MCF 10A (cell line): ENCODE measurements at regions of chr12 and their contacts with region 1.

Region 1: DNA sequence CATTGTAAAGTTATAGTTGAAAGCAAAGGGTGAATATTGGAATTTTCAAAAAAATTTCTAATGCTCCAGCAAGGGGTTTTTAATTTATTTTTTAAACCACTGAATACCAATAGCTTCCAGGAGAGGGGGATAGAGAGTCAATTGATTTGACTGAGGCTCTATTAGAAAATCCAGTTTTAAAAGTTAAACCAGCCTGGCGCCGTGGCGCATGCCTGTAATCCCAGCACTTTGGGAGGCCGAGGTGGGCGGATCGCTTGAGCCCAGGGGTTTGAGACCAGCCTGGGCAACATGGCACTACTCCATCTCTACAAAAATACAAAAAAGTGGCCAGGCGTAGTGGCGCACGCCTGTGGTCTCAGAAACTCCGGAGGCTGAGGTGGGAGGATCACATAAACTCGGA is 150.1 kb downstream of the SLC38A4 start:
- DNase-seq: peak; percentile 72
- H3K4me3 Mint-ChIP-seq: no peak overlapping the region
- H3K27ac Mint-ChIP-seq: peak overlapping the region; percentile 98
- H3K4me1 Mint-ChIP-seq: peaks cover 43% of the 10 kb centered on the region
- H3K27me3 Mint-ChIP-seq: no peaks in the 10 kb centered on the region
- CTCF ChIP-seq: peak; percentile 69

Region 2: GRCh38 chr12:46071769-46072624 is 603.7 kb before region 1 on chr12:
- CTCF ChIA-PET with region 1: interaction called, 4 read pairs
- POLR2A ChIA-PET with region 1: interaction called, 5 read pairs
- intact Hi-C with region 1: loop called (anchors 1 kb)
- DNase-seq: peak; percentile 87
- H3K4me3 Mint-ChIP-seq: no peak overlapping the region
- H3K27ac Mint-ChIP-seq: peak overlapping the region; percentile 47
- H3K4me1 Mint-ChIP-seq: peaks cover 20% of the 10 kb centered on the region
- H3K27me3 Mint-ChIP-seq: no peaks in the 10 kb centered on the region
- CTCF ChIP-seq: peak; percentile 95

Region 3: DNA sequence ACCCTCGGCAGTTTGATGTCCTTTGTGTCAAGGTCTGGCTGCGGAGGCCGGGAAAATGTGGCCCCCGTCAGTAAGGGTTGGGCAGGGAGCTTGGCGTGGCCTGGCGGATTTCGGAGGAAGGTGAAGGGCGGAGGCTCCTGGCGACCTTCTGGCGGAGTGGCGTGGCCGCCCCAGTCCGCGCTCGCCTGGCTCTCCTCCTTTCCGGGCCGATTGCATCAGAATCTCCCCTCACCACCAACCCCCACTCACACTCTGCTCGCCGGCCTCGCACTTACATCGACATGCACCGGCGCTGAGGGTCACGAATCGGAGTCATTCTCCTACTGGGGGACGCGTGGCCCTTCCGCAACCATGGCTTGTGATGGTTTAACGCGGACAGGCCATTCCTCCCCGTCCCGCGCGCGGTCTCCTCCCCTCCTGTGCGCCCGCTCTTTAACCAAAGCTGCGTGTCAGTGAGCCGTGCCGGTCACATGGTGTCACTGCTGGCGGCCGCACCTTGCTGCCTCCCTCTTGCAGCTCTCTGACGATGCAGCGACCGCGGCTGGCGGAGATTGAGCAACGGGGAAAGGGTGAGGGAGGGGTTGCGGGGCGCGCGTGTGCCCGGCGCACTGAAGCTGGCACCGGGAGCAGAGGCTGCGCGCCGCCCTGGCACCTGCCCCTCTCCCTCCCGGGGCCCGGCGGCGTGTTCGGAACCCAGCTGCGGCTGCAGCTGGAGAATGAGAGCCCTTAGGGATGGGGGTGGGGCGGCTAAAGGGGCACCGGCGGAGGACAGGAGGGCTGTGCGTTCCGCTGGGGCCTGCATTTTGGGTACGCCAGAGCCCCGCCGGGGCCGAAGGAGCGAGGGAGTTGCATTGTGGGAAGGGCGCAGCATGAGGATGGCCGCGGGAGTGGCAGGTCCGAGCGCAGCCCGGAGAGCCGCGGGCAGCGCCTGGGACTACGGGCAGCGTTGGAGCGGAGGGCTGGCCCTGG is 406.9 kb before region 1 on chr12 and contains the start of gene SLC38A1:
- CTCF ChIA-PET with region 1: no interaction called
- POLR2A ChIA-PET with region 1: interaction called, 21 read pairs
- intact Hi-C with region 1: loop called (anchors 2 kb)
- DNase-seq: peak; percentile 96
- H3K4me3 Mint-ChIP-seq: no peak within 1 kb of the TSS
- H3K27ac Mint-ChIP-seq: no peak within 1 kb of the TSS
- H3K4me1 Mint-ChIP-seq: peaks cover 6% of the 10 kb centered on the region
- H3K27me3 Mint-ChIP-seq: no peaks in the 10 kb centered on the region
- CTCF ChIP-seq: no peak
- total RNA-seq, gene SLC38A1: 327 and 339 TPM in 2 replicates

Region 4: DNA sequence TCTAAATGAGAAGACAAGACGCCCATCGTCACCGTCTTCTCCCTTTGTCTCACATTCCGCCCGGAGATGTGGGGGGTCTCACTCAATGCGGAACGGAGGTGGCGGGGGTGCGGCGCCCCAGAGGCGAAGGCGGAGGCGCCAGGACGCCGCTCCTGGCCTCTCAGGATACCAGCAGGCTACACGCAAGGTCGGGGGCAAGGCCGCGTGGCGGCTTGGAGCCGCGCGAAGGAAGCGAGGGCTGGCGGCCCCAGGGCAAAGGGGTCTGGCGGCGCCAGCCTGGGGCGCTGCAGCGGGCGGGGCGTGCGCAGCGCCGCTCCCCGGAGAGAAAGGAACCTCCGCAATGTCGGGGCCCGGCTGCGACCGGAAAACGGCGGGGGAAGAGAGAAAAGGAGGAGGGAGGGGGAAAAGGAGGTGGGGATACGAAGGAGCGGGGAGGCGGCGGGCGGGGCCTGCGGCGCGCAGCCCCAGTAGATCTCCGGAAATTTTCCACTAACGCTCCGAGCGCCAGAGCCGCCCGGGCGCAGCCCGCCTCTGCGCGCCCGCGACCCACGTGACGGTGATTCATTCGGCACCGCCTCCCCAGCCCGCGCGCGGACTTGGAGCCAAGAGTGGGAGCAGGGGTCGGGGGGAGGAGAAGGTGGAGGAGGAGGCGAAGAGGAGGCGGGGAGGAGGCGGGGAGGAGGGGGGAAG is 292.6 kb before region 1 on chr12:
- CTCF ChIA-PET with region 1: interaction called, 9 read pairs
- POLR2A ChIA-PET with region 1: interaction called, 97 read pairs
- intact Hi-C with region 1: no loop called
- DNase-seq: peak; percentile 97
- H3K4me3 Mint-ChIP-seq: peak overlapping the region; percentile 91
- H3K27ac Mint-ChIP-seq: peak overlapping the region; percentile 97
- H3K4me1 Mint-ChIP-seq: peaks cover 33% of the 10 kb centered on the region
- H3K27me3 Mint-ChIP-seq: no peaks in the 10 kb centered on the region
- CTCF ChIP-seq: no peak

Region 5: GRCh38 chr12:46556105-46556559 is 119.6 kb before region 1 on chr12:
- CTCF ChIA-PET with region 1: interaction called, 3 read pairs
- POLR2A ChIA-PET with region 1: interaction called, 93 read pairs
- intact Hi-C with region 1: loop called (anchors 2 kb)
- DNase-seq: peak; percentile 85
- H3K4me3 Mint-ChIP-seq: peak overlapping the region; percentile 17
- H3K27ac Mint-ChIP-seq: peak overlapping the region; percentile 68
- H3K4me1 Mint-ChIP-seq: peaks cover 73% of the 10 kb centered on the region
- H3K27me3 Mint-ChIP-seq: no peaks in the 10 kb centered on the region
- CTCF ChIP-seq: no peak

Region 6: GRCh38 chr12:46722394-46723185 is 46.9 kb after region 1 on chr12:
- CTCF ChIA-PET with region 1: no interaction called
- POLR2A ChIA-PET with region 1: no interaction called
- intact Hi-C with region 1: no loop called
- DNase-seq: no peak
- H3K4me3 Mint-ChIP-seq: no peak overlapping the region
- H3K27ac Mint-ChIP-seq: no peak overlapping the region
- H3K4me1 Mint-ChIP-seq: no peaks in the 10 kb centered on the region
- H3K27me3 Mint-ChIP-seq: no peaks in the 10 kb centered on the region
- CTCF ChIP-seq: no peak

Region 7: DNA sequence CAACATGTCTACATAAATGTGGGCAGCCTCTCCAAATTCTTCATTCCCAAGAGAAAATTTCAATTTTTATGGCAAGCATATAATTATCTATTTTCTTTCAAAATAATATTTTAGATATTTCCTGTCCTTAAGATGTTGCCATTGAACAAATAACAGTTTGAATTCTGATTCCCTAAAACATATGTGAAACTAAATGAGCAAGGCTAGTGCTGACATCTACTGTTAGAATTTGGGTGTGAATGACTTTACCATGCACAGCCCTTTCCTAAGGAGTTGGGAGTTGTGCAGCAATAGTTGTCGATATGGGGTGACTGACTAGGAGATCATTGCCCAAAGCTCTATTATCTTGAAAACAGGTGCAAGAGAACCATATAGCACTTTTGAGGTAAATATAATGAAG is 258.2 kb after region 1 on chr12:
- CTCF ChIA-PET with region 1: interaction called, 47 read pairs
- POLR2A ChIA-PET with region 1: interaction called, 8 read pairs
- intact Hi-C with region 1: loop called (anchors 1 kb)
- DNase-seq: peak; percentile 68
- H3K4me3 Mint-ChIP-seq: no peak overlapping the region
- H3K27ac Mint-ChIP-seq: no peak overlapping the region
- H3K4me1 Mint-ChIP-seq: peaks cover 6% of the 10 kb centered on the region
- H3K27me3 Mint-ChIP-seq: no peaks in the 10 kb centered on the region
- CTCF ChIP-seq: peak; percentile 71